Endothelial cell of umbilical vein (primary cell): ENCODE measurements at regions of chr1 and their contacts with region 1.

Region 1: GRCh38 chr1:171389171-171389570 is 75.2 kb downstream of the FMO4 start:
- DNase-seq: no peak
- H3K4me3 ChIP-seq: no peak overlapping the region
- H3K27ac ChIP-seq: no peak overlapping the region
- H3K4me1 ChIP-seq: no peaks in the 10 kb centered on the region
- H3K27me3 ChIP-seq: no peaks in the 10 kb centered on the region
- CTCF ChIP-seq: no peak
- POLR2A ChIP-seq: no peak

Region 2: GRCh38 chr1:171530676-171531075 is 141.5 kb after region 1 on chr1:
- CTCF ChIA-PET with region 1: no interaction called
- POLR2A ChIA-PET with region 1: no interaction called
- dilution Hi-C with region 1: no loop called
- intact Hi-C with region 1: no loop called
- DNase-seq: no peak
- H3K4me3 ChIP-seq: no peak overlapping the region
- H3K27ac ChIP-seq: no peak overlapping the region
- H3K4me1 ChIP-seq: no peaks in the 10 kb centered on the region
- H3K27me3 ChIP-seq: no peaks in the 10 kb centered on the region
- CTCF ChIP-seq: no peak
- POLR2A ChIP-seq: no peak

Region 3: GRCh38 chr1:171929121-171929520 is 540.0 kb after region 1 on chr1:
- CTCF ChIA-PET with region 1: no interaction called
- POLR2A ChIA-PET with region 1: no interaction called
- dilution Hi-C with region 1: no loop called
- intact Hi-C with region 1: loop called (anchors 10 kb)
- DNase-seq: no peak
- H3K4me3 ChIP-seq: no peak overlapping the region
- H3K27ac ChIP-seq: no peak overlapping the region
- H3K4me1 ChIP-seq: no peaks in the 10 kb centered on the region
- H3K27me3 ChIP-seq: no peaks in the 10 kb centered on the region
- CTCF ChIP-seq: peak in 1 of 2 donors; percentile 18
- POLR2A ChIP-seq: no peak